Heart right ventricle (tissue), 16 donors: ENCODE measurements at regions of chr16 and their contacts with region 1.

Region 1: GRCh38 chr16:56681939-56682702 is at the start of gene MT1X:
- DNase-seq: peak; percentile 88 to 95
- ATAC-seq: peak; percentile 93 to 99 (median 98)
- H3K4me3 ChIP-seq: peak within 1 kb of the TSS; percentile 37 to 71 (median 58)
- H3K27ac ChIP-seq: peak within 1 kb of the TSS; percentile 60 to 90 (median 82)
- H3K4me1 ChIP-seq: peaks cover 0 to 55% (median 28%) of the 10 kb centered on the region in 9 donors
- H3K27me3 ChIP-seq: peaks cover 0 to under 1% (median 0%) of the 10 kb centered on the region in 7 donors
- CTCF ChIP-seq: no peak
- total RNA-seq, gene MT1X: 15.8 to 616 (median 71.4) TPM

Region 2: DNA sequence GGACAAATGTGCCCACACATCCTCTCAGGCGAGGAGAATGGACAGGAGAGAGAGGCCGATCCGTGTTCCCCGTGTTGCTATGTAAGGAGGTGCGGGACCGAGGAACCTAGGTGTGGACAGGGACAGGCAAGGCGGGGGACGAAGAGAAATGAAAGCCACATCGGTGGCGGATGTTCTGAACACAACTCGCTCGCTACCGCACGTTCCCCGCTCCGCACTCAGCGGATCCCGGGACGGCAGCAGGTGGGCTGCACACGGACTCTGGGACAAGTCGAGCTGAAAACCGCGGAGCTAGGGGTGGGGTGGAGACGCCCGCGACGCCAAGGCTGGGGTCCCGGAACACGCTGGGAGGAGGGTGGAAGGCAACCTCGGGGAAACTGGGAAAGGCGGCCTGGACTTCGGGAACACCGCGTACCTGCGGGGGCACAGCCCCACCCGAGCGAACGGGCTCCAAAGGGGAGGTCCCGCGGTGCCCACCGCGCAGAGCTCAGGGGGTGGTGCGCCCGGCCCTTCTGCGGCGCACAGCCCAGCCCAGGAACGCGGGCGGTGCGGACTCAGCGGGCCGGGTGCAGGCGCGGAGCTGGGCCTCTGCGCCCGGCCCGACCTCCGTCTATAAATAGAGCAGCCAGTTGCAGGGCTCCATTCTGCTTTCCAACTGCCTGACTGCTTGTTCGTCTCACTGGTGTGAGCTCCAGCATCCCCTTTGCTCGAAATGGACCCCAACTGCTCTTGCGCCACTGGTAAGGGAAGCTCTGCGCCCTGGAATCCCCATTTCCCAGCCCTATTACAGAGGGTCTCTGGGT is 56.8 kb before region 1 on chr16 and contains the start of gene MT1E:
- intact Hi-C with region 1: loop called in 2 of 10 experiments (anchors 5 kb)
- DNase-seq: peak; percentile 85 to 86
- ATAC-seq: peak; percentile 92 to 96 (median 94)
- H3K4me3 ChIP-seq: peak within 1 kb of the TSS; percentile 26 to 82 (median 67)
- H3K27ac ChIP-seq: peak within 1 kb of the TSS; percentile 76 to 98 (median 93)
- H3K4me1 ChIP-seq: peaks cover 0 to 29% (median 14%) of the 10 kb centered on the region in 9 donors
- H3K27me3 ChIP-seq: peaks cover 0 to 4% (median 0%) of the 10 kb centered on the region in 7 donors
- CTCF ChIP-seq: peak in 1 of 9 donors; percentile 2
- total RNA-seq, gene MT1E: 83.3 to 164 (median 97.0) TPM

Region 3: DNA sequence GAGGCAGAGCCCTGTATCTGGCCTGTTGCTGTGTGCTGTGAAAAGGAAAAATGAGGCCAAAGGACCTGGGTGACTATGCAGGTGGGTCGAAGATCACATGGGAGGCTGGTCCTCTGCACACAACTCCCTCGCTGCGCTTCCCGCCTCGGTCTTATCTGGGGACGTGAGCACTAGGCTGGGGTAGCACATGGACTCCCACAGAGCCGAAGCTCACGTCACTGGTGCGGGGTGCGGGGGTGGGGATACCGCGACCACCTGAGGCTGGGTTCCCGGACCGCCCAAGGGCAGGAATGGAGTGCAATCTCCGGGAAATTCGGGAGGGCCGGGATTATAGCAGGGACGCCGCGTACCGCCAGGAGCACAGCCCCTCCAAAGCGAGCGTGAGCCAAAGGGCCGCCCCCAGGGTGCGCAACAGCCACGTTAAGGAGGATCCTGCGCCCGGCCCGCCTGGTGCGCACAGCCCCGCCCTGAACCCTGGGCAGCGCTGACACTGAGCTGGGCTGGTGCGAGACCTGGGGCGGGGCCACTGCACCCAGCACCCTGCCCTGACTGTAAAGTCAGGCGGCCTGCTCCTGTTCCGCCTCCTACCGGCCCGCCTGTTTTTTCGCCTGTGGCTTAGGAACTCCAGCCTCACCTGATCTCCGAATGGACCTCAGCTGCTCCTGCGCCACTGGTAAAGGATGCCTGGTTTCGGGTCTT is 38.9 kb before region 1 on chr16:
- intact Hi-C with region 1: loop called in 1 of 10 experiments (anchors 5 kb)
- DNase-seq: peak; percentile 42 to 77
- ATAC-seq: peak; percentile 85 to 94 (median 92)
- H3K4me3 ChIP-seq: peak overlapping the region in 9 of 10 donors; percentile 11 to 49 (median 41)
- H3K27ac ChIP-seq: peak overlapping the region in 5 of 10 donors; percentile 0 to 42 (median 23)
- H3K4me1 ChIP-seq: peaks cover 0 to 31% (median 20%) of the 10 kb centered on the region in 9 donors
- H3K27me3 ChIP-seq: peaks cover 0 to 95% (median 46%) of the 10 kb centered on the region in 7 donors
- CTCF ChIP-seq: peak in 8 of 9 donors; percentile 6 to 60 (median 46)

Region 4: GRCh38 chr16:57775661-57776469 is 1093.7 kb after region 1 on chr16:
- intact Hi-C with region 1: no loop called
- DNase-seq: no peak
- ATAC-seq: peak in 4 of 8 donors; percentile 7 to 24 (median 20)
- H3K4me3 ChIP-seq: no peak overlapping the region
- H3K27ac ChIP-seq: no peak overlapping the region
- H3K4me1 ChIP-seq: peaks cover 0 to 12% (median 3%) of the 10 kb centered on the region in 9 donors
- H3K27me3 ChIP-seq: no peaks in the 10 kb centered on the region
- CTCF ChIP-seq: peak in 6 of 9 donors; percentile 5 to 33 (median 18)